ENCODE measurements at regions of chr9 and their contacts with region 1.

Region 1: GRCh38 chr9:26326473-26327044 is 566.0 kb downstream of the CAAP1 start:
- DNase-seq: no peak
- ATAC-seq: no peak
- H3K4me3 ChIP-seq: no peak overlapping the region
- H3K27ac ChIP-seq: no peak overlapping the region
- H3K4me1 ChIP-seq: no peaks in the 10 kb centered on the region
- H3K27me3 ChIP-seq: peaks cover 0 to 4% (median 0%) of the 10 kb centered on the region in 9 donors
- CTCF ChIP-seq: peak; percentile 47 to 76 (median 59)
- POLR2A ChIP-seq: no peak

Region 2: GRCh38 chr9:25964239-25964638 is 362.3 kb before region 1 on chr9:
- intact Hi-C with region 1: loop called in 1 of 10 experiments (anchors 10 kb)
- DNase-seq: no peak
- ATAC-seq: no peak
- H3K4me3 ChIP-seq: no peak overlapping the region
- H3K27ac ChIP-seq: no peak overlapping the region
- H3K4me1 ChIP-seq: no peaks in the 10 kb centered on the region
- H3K27me3 ChIP-seq: no peaks in the 10 kb centered on the region
- CTCF ChIP-seq: peak in 5 of 12 donors; percentile 11 to 38 (median 32)
- POLR2A ChIP-seq: no peak

Region 3: DNA sequence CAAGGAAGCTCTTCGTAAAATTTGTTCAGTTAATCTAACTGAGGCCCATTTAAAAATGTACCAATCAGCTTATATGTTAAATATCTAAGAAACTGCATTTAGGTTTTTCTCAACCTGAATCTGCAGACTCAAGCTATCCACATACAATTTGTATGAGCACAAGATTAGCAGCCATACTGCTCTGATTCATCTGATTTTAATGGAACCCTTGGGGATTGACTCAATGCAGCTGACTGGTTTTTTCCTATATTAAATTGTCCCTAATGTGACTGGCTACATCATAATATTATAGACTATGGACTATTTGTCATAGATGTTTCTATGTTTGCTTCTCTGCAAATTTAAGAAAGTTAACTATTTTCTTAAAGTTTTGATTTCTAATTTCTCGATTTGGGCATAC is 197.3 kb before region 1 on chr9:
- intact Hi-C with region 1: no loop called
- DNase-seq: no peak
- ATAC-seq: no peak
- H3K4me3 ChIP-seq: no peak overlapping the region
- H3K27ac ChIP-seq: no peak overlapping the region
- H3K4me1 ChIP-seq: no peaks in the 10 kb centered on the region
- H3K27me3 ChIP-seq: no peaks in the 10 kb centered on the region
- CTCF ChIP-seq: no peak
- POLR2A ChIP-seq: no peak

Region 4: DNA sequence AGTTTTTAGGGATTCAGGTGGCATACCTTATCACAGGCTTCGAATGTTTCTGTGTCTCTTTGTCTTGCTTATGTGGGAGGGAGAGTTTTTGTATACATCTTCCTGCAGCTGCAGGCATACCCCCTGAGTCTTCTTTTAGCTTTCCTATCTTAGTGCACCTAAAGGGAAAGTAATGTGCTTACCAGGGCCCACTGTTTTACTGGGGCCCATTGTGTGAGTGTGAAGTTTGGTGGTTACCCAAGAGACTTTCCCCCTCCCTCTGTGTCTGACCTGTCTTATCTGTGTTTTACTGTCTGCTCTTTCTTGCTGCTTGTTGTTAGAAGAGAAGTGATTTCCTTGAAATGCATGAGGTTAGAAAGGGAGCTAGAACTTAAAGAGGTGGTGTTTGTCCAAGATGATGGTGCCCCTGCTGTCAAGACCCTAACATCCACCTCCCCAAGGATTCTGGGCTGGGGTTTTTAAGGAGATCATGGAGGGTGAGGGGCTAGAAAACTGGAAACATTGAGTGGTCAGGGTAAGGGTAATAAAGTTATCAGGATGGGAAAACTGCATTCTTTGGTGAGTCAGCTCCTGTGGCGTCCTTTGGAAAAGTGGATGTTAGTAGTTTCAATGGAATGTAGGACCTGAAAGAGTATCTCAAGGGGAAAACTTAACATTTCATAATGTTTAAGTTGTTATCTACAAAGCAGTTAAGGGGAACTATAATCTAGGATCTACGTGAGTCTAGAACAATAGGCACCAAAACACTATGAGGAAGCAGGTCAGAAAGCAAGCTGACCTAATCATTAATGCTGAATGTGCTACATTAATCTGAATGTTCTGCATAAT is 64.8 kb before region 1 on chr9:
- intact Hi-C with region 1: no loop called
- DNase-seq: no peak
- ATAC-seq: no peak
- H3K4me3 ChIP-seq: no peak overlapping the region
- H3K27ac ChIP-seq: no peak overlapping the region
- H3K4me1 ChIP-seq: no peaks in the 10 kb centered on the region
- H3K27me3 ChIP-seq: no peaks in the 10 kb centered on the region
- CTCF ChIP-seq: no peak
- POLR2A ChIP-seq: no peak

Region 5: GRCh38 chr9:26296910-26297572 is 29.5 kb before region 1 on chr9:
- intact Hi-C with region 1: no loop called
- DNase-seq: no peak
- ATAC-seq: no peak
- H3K4me3 ChIP-seq: no peak overlapping the region
- H3K27ac ChIP-seq: no peak overlapping the region
- H3K4me1 ChIP-seq: no peaks in the 10 kb centered on the region
- H3K27me3 ChIP-seq: no peaks in the 10 kb centered on the region
- CTCF ChIP-seq: no peak
- POLR2A ChIP-seq: no peak